CD14-positive monocyte (primary cell): ENCODE measurements at regions of chr4 and their contacts with region 1.

Region 1: DNA sequence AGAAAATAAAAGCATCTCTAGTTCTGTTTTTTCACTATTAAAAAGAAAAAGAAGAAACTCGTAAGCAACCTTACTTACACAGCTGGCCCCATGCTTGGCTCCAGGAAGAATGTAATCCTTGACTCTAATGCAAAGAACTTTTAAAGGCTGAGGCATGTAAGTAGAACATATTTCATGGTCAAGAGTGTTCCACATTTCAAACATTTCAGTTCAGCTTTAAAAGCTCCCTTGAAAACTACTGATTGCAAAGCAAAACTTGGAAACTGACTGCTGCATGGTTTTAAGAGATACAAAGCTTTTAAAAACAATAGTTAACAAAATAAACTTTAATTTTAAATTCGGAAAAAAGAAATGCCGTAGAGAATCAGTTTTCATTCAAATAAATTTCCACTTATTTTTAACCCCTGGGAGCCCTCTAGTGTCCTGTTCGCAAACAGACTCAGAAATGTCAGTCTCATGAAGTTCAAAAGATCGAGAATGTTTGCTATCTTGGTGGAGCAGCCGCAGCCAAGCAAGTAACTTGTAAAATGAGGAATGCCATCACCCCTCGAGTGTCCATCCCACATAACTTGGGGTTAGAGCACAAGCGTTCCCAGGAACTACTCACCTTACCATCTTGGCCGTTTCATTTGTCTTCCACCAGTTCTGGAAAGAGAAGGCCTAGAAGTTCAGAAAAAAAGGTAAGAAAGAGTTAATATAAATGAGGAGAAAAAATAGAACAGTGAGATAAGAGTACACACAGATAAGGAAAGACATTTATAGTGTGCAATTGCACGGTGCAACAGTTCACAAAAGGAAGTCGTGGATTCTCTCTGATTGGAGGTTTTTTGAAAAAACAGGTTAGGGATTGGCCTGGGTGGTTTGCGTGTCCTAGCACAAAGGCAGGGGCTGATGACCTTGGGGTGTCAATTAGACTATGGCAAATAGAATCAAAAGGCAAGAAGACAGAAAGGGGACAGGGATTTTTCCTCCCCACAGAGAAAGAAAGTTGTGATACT is at the start of gene GASK1B:
- DNase-seq: peak in 1 of 3 donors; percentile 52
- H3K4me3 ChIP-seq: peak within 1 kb of the TSS; percentile 66 to 98 (median 68)
- H3K4me3 Mint-ChIP-seq: peak within 1 kb of the TSS; percentile 93 to 98
- H3K27ac ChIP-seq: peak within 1 kb of the TSS in 1 of 2 donors; percentile 82
- H3K27ac Mint-ChIP-seq: peak within 1 kb of the TSS; percentile 73 to 92 (median 88)
- H3K4me1 ChIP-seq: peaks cover 47 to 58% of the 10 kb centered on the region in 2 donors
- H3K4me1 Mint-ChIP-seq: peaks cover 62% of the 10 kb centered on the region
- H3K27me3 ChIP-seq: no peaks in the 10 kb centered on the region
- H3K27me3 Mint-ChIP-seq: peaks cover 0 to 3% (median 0%) of the 10 kb centered on the region in 3 donors
- CTCF ChIP-seq: peak; percentile 61
- polyA plus RNA-seq, gene GASK1B: 34.4 to 106 (median 82.2) TPM

Region 2: DNA sequence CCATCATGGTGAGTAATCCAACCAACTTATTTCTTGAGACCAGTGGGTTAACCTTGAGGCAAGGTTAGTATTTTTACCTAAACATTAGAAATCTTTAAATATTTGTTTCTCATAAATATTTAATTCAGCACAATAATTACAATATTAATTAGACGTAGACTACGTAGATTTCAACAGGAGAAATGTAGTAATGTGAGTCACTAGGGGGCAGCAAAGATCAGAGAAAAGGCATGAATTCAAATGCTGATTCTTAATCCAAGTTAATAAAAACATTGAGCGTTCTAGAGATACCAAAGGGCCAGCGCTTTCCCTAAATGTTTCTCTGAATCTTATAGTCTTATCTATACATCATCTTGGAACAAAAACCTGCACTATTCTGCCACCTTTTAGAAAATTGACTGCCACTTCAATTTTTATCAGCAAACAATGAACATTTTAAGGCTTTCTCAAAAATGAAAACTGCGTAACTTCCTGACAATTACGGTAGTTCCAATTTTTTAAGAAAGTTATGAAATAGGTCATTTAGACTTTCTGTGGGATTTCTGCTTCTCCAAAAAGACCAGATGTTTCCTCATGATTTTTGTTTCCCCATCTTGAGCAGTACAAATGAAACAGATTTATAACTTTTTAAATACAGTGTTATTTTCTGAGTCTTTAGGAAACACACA is 180.4 kb before region 1 on chr4:
- intact Hi-C with region 1: loop called (anchors 5 to 10 kb)
- DNase-seq: peak; percentile 71 to 84 (median 78)
- H3K4me3 ChIP-seq: peak overlapping the region; percentile 48 to 94 (median 76)
- H3K4me3 Mint-ChIP-seq: peak overlapping the region; percentile 69 to 79
- H3K27ac ChIP-seq: peak overlapping the region in 1 of 2 donors; percentile 85
- H3K27ac Mint-ChIP-seq: peak overlapping the region; percentile 80 to 92 (median 89)
- H3K4me1 ChIP-seq: peaks cover 34 to 49% of the 10 kb centered on the region in 2 donors
- H3K4me1 Mint-ChIP-seq: peaks cover 46% of the 10 kb centered on the region
- H3K27me3 ChIP-seq: no peaks in the 10 kb centered on the region
- H3K27me3 Mint-ChIP-seq: no peaks in the 10 kb centered on the region
- CTCF ChIP-seq: peak; percentile 86

Region 3: GRCh38 chr4:158209825-158210807 is 37.6 kb after region 1 on chr4 and contains the start of gene TMEM144:
- intact Hi-C with region 1: loop called (anchors 5 kb)
- DNase-seq: peak; percentile 87 to 92 (median 89)
- H3K4me3 ChIP-seq: peak within 1 kb of the TSS; percentile 38 to 76 (median 45)
- H3K4me3 Mint-ChIP-seq: peak within 1 kb of the TSS; percentile 78 to 90
- H3K27ac ChIP-seq: peak within 1 kb of the TSS; percentile 98 to 100
- H3K27ac Mint-ChIP-seq: peak within 1 kb of the TSS; percentile 98 to 99 (median 99)
- H3K4me1 ChIP-seq: peaks cover 29 to 32% of the 10 kb centered on the region in 2 donors
- H3K4me1 Mint-ChIP-seq: peaks cover 28% of the 10 kb centered on the region
- H3K27me3 ChIP-seq: no peaks in the 10 kb centered on the region
- H3K27me3 Mint-ChIP-seq: peaks cover 1 to 2% (median 2%) of the 10 kb centered on the region in 3 donors
- CTCF ChIP-seq: no peak
- polyA plus RNA-seq, gene TMEM144: 1.0 to 27.9 (median 1.5) TPM

Region 4: DNA sequence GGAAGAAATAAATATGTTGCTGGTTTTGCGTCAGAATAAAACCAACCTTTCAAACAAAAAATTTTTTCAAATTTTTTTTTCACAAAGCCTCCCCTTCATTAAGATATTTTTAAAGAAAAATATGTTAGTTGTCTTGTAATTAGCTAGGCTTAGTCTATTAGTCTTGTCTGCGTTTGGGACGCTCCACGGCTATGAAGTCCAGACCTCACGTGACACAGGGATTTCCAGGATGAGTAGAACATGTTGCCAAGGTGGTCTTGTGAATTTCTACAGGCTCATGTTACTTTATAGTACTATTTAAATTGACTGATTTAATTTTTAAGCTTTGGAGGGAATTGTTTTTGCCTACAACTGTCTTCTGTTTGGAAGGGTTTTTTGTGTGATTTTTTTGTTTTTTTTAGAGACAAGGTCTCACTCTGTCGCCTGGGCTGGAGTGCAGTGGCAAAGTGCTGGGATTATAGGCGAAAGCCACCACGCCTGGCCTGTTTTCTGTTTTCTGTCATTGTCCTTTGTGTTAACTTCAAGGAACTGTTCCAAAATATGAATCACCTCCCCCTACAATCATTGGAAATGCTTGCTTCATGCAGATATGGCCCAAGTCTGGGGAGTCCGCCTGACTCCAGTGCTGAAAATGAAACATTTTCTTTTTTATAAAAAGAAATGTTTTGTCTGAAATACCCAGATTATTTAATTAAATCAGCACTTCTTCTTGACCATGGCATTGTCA is 63.9 kb after region 1 on chr4:
- intact Hi-C with region 1: no loop called
- DNase-seq: peak in 1 of 3 donors; percentile 6
- H3K4me3 ChIP-seq: no peak overlapping the region
- H3K4me3 Mint-ChIP-seq: no peak overlapping the region
- H3K27ac ChIP-seq: no peak overlapping the region
- H3K27ac Mint-ChIP-seq: peak overlapping the region in 1 of 7 donors; percentile 35
- H3K4me1 ChIP-seq: no peaks in the 10 kb centered on the region
- H3K4me1 Mint-ChIP-seq: peaks cover 13% of the 10 kb centered on the region
- H3K27me3 ChIP-seq: no peaks in the 10 kb centered on the region
- H3K27me3 Mint-ChIP-seq: no peaks in the 10 kb centered on the region
- CTCF ChIP-seq: no peak